WTC11 (cell line): ENCODE measurements at regions of chr22 and their contacts with region 1.

Region 1: GRCh38 chr22:19730655-19731360 is 7.5 kb downstream of the GP1BB start:
- DNase-seq: peak; percentile 90
- ATAC-seq: peak; percentile 89
- H3K4me3 Mint-ChIP-seq: peak overlapping the region; percentile 57
- H3K27ac Mint-ChIP-seq: no peak overlapping the region
- H3K4me1 Mint-ChIP-seq: no peaks in the 10 kb centered on the region
- H3K27me3 Mint-ChIP-seq: peaks cover 48% of the 10 kb centered on the region
- CTCF ChIP-seq: peak; percentile 92

Region 2: GRCh38 chr22:19679522-19680101 is 51.2 kb before region 1 on chr22:
- CTCF ChIA-PET with region 1: interaction called, 24 read pairs
- POLR2A ChIA-PET with region 1: no interaction called
- DNase-seq: peak; percentile 91
- ATAC-seq: peak; percentile 95
- H3K4me3 Mint-ChIP-seq: no peak overlapping the region
- H3K27ac Mint-ChIP-seq: no peak overlapping the region
- H3K4me1 Mint-ChIP-seq: peaks cover 11% of the 10 kb centered on the region
- H3K27me3 Mint-ChIP-seq: peaks cover 4% of the 10 kb centered on the region
- CTCF ChIP-seq: peak; percentile 95

Region 3: DNA sequence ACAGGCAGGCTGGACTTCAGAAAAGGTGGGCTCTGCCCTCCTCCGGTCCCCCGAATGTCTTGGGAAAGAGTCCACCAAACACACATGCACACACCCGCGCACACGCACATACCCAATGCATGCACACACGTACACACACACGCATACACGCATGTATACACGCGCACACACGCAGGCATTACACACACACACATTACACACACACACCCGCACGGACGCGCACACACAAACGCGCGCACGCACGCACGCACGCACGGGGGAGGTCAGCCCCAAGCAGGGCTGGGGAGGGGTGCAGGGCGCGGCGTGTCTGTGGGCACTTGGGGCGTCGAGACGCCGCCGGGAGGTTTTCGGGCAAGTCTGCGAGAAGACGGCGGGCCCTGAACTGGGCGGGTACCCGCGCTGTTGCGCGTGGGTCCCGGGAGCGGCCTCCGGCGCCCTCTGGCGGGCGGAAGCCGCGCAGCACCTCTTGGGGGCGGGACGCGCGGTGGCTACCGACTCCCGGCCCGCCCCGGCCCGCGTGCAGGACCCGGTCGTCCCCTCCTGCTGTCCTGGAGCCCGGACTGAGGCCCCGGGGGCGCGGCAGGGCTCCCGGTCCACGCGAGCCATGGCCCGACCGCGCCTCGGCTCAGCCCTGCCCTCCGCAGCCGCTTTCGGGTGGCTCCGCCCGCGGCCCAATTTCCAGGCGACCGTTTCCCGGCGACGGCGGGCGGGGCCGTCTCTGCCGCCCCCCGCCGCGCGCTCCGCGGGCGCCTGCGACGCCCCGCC is 12.9 kb before region 1 on chr22:
- CTCF ChIA-PET with region 1: interaction called, 17 read pairs
- POLR2A ChIA-PET with region 1: no interaction called
- DNase-seq: peak; percentile 70
- ATAC-seq: peak; percentile 29
- H3K4me3 Mint-ChIP-seq: peak overlapping the region; percentile 62
- H3K27ac Mint-ChIP-seq: no peak overlapping the region
- H3K4me1 Mint-ChIP-seq: peaks cover 21% of the 10 kb centered on the region
- H3K27me3 Mint-ChIP-seq: peaks cover 80% of the 10 kb centered on the region
- CTCF ChIP-seq: peak; percentile 95

Region 4: GRCh38 chr22:19766511-19767426 is 36.0 kb after region 1 on chr22:
- CTCF ChIA-PET with region 1: interaction called, 42 read pairs
- POLR2A ChIA-PET with region 1: no interaction called
- DNase-seq: peak; percentile 73
- ATAC-seq: peak; percentile 21
- H3K4me3 Mint-ChIP-seq: peak overlapping the region; percentile 44
- H3K27ac Mint-ChIP-seq: no peak overlapping the region
- H3K4me1 Mint-ChIP-seq: peaks cover 27% of the 10 kb centered on the region
- H3K27me3 Mint-ChIP-seq: peaks cover 90% of the 10 kb centered on the region
- CTCF ChIP-seq: peak; percentile 30

Region 5: DNA sequence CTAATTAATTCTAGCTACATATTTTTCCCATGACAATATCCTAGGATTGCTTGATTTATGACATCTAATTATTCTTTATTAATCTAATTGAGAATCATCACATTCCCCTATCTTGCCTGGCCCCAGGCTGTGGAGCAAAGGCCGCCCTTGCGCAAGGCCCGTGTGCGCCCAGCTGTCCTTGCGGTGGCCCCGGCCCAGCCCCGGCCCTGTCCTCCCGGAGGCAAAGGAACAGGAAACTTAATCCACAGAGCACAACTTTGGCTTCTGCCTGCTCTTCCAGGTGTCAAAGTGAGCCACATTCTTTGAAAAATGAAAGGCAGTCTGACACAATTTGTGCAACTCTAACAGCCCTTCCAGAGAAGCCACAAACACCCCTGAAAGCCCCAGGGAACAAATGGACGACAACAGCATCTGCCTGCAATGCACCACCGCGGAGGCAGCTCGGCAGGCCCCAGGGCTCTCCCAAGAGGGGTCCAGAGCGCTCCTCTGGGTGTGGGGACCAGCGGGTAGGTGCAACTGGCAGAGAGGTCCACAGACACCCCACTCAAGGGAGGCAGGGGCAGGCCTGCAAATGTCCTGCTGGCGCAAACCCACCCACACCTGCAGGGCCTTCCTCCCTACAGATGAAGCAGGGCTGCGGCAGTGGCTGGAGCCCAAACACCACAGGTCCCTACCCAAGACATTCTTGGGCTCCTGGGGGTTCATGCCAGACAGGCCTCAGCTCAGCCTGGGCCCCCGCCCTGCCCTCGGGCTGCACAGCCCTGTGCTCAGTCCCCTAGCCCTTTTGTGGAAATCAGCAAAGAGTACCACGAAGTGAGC is 93.6 kb after region 1 on chr22:
- CTCF ChIA-PET with region 1: interaction called, 13 read pairs
- POLR2A ChIA-PET with region 1: no interaction called
- DNase-seq: no peak
- ATAC-seq: no peak
- H3K4me3 Mint-ChIP-seq: no peak overlapping the region
- H3K27ac Mint-ChIP-seq: no peak overlapping the region
- H3K4me1 Mint-ChIP-seq: peaks cover 5% of the 10 kb centered on the region; the same call in 1 of the 2 replicates
- H3K27me3 Mint-ChIP-seq: no peaks in the 10 kb centered on the region
- CTCF ChIP-seq: no peak

Region 6: DNA sequence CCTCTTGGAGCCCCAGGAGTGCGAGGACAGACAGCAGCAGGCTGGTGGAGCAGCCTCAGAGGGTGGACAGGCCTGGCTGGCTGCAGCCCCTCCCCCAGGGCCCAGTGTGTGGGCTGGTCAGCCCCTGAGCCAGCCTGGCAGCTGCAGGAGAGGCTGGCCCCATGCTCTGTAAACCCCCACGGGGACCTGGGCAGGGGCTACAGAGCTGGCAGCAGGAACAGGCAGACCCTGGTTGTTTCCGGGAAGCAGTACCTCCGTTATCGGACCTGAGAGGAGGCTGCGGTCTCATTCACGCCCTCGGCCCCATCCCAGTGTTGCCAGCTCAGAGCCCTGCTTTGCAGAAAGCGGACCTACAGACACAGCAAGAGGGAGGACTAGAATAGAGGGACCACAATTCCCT is 172.2 kb after region 1 on chr22:
- CTCF ChIA-PET with region 1: interaction called, 56 read pairs
- POLR2A ChIA-PET with region 1: no interaction called
- DNase-seq: no peak
- ATAC-seq: peak; percentile 60
- H3K4me3 Mint-ChIP-seq: no peak overlapping the region
- H3K27ac Mint-ChIP-seq: no peak overlapping the region
- H3K4me1 Mint-ChIP-seq: peaks cover 11% of the 10 kb centered on the region
- H3K27me3 Mint-ChIP-seq: no peaks in the 10 kb centered on the region; the same call in 1 of the 2 replicates
- CTCF ChIP-seq: no peak

Region 7: GRCh38 chr22:19955241-19956128 is 224.7 kb after region 1 on chr22:
- CTCF ChIA-PET with region 1: interaction called, 28 read pairs
- POLR2A ChIA-PET with region 1: no interaction called
- DNase-seq: no peak
- ATAC-seq: no peak
- H3K4me3 Mint-ChIP-seq: no peak overlapping the region
- H3K27ac Mint-ChIP-seq: no peak overlapping the region
- H3K4me1 Mint-ChIP-seq: peaks cover 28% of the 10 kb centered on the region
- H3K27me3 Mint-ChIP-seq: no peaks in the 10 kb centered on the region
- CTCF ChIP-seq: no peak

Region 8: DNA sequence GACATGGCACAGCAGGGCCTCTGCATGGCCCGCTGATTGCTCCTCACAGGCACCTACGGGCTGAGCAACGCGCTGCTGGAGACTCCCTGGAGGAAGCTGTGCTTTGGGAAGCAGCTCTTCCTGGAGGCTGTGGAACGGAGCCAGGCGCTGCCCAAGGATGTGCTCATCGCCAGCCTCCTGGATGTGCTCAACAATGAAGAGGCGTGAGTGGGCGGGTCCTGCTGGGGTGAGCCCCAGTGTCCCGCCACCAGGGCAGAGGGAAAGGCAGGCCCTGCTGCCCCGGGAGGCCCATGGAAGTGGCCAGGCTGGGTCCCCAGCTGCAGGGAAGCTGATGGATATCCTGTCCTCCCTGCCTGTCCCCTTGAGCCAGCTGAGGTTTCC is 330.7 kb after region 1 on chr22:
- CTCF ChIA-PET with region 1: no interaction called
- POLR2A ChIA-PET with region 1: no interaction called
- DNase-seq: no peak
- ATAC-seq: no peak
- H3K4me3 Mint-ChIP-seq: no peak overlapping the region
- H3K27ac Mint-ChIP-seq: no peak overlapping the region
- H3K4me1 Mint-ChIP-seq: no peaks in the 10 kb centered on the region
- H3K27me3 Mint-ChIP-seq: no peaks in the 10 kb centered on the region; the same call in 1 of the 2 replicates
- CTCF ChIP-seq: no peak